ENCODE measurements at regions of chr1 and their contacts with region 1.

Region 1: GRCh38 chr1:186375088-186375953 is at the starts of genes ODR4 and TPR:
- DNase-seq: peak; percentile 97 to 100 (median 98)
- ATAC-seq: peak; percentile 94
- H3K4me3 ChIP-seq: peak within 1 kb of the TSS; percentile 78
- H3K27ac ChIP-seq: peak within 1 kb of the TSS; percentile 91
- H3K4me1 ChIP-seq: no peaks in the 10 kb centered on the region
- H3K27me3 ChIP-seq: no peaks in the 10 kb centered on the region
- CTCF ChIP-seq: peak; percentile 96 to 100 (median 98)
- EP300 ChIP-seq: peak; percentile 54
- POLR2A ChIP-seq: peak; percentile 96
- RAD21 ChIP-seq: peak; percentile 44 to 53; a peak in 3 of 4 replicates
- polyA plus RNA-seq, gene ODR4: 52.6 to 63.9 TPM
- polyA plus RNA-seq, gene TPR: 48.5 to 54.3 TPM

Region 2: DNA sequence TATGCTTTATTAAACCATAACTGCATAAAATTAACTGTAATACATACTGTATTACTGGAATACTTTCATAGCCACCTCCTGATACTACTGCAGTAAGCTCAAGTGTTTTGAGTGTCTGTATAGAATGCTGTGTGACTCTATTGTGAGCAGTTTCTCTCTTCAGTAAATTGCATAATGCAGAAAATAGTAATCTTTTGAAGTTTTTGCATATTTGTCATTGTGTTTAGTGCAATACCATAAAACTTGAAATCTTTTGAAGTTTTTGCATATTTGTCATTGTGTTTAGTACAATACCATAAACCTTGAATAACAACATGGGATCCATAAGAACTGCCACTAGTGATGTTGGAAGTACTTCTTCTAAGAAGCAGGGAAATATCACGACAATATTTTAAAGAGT is 11.4 kb before region 1 on chr1:
- CTCF ChIA-PET with region 1: no interaction called
- POLR2A ChIA-PET with region 1: interaction called, 12 read pairs
- in situ Hi-C with region 1: no loop called
- intact Hi-C with region 1: no loop called
- DNase-seq: no peak
- ATAC-seq: no peak
- H3K4me3 ChIP-seq: no peak overlapping the region
- H3K27ac ChIP-seq: no peak overlapping the region
- H3K4me1 ChIP-seq: no peaks in the 10 kb centered on the region
- H3K27me3 ChIP-seq: no peaks in the 10 kb centered on the region
- CTCF ChIP-seq: no peak
- EP300 ChIP-seq: no peak
- POLR2A ChIP-seq: no peak
- RAD21 ChIP-seq: no peak

Region 3: DNA sequence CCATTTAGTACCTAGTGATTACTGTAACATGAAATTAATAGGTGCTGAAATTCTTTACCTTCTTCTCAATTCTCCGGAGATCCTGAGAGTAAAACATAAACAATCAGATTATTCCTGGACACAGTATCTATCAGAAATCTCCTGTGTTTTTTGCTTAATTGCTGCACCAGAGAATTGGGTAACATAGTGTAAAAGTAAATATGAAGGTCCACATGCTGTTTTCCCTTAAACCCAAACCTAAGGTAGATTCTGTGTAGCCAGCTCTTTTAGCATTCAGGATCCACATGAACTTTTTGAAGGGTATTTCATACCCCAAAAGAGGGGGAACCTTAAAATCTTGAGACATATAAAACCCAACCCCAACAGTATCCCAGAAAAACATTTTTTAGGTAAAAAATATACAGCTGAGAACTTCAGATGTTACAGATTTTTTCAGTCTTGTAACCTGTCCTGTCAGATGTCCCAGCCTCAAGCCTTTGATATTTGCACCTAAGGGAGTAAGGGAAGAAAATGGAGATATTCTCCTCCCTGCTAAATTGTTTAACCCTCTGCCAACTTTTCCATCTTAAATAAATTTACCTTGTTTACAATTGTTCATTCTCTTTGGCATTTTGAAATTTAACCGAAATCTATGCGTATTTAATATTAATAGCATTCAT is 11.5 kb after region 1 on chr1:
- CTCF ChIA-PET with region 1: no interaction called
- POLR2A ChIA-PET with region 1: interaction called, 19 read pairs
- in situ Hi-C with region 1: no loop called
- intact Hi-C with region 1: no loop called
- DNase-seq: no peak
- ATAC-seq: no peak; the same call in 2 of the 3 replicates
- H3K4me3 ChIP-seq: no peak overlapping the region
- H3K27ac ChIP-seq: no peak overlapping the region
- H3K4me1 ChIP-seq: no peaks in the 10 kb centered on the region
- H3K27me3 ChIP-seq: no peaks in the 10 kb centered on the region
- CTCF ChIP-seq: no peak
- EP300 ChIP-seq: no peak
- POLR2A ChIP-seq: no peak
- RAD21 ChIP-seq: no peak